ENCODE measurements at regions of chr12 and their contacts with region 1.

Region 1: GRCh38 chr12:50283229-50283923 is at the start of gene LIMA1:
- DNase-seq: peak; percentile 84 to 96 (median 93)
- ATAC-seq: peak; percentile 97
- H3K4me3 ChIP-seq: peak within 1 kb of the TSS; percentile 57 to 87
- H3K4me3 Mint-ChIP-seq: peak within 1 kb of the TSS; percentile 93
- H3K27ac ChIP-seq: peak within 1 kb of the TSS; percentile 59 to 69
- H3K27ac Mint-ChIP-seq: peak within 1 kb of the TSS; percentile 93
- H3K4me1 ChIP-seq: peaks cover 19% of the 10 kb centered on the region
- H3K4me1 Mint-ChIP-seq: peaks cover 29% of the 10 kb centered on the region
- H3K27me3 ChIP-seq: no peaks in the 10 kb centered on the region
- H3K27me3 Mint-ChIP-seq: no peaks in the 10 kb centered on the region
- CTCF ChIP-seq: no peak
- total RNA-seq, gene LIMA1: 4.2 TPM

Region 2: GRCh38 chr12:50025187-50026059 is 258.0 kb before region 1 on chr12 and contains the start of gene RACGAP1:
- CTCF ChIA-PET with region 1: no interaction called
- POLR2A ChIA-PET with region 1: no interaction called
- intact Hi-C with region 1: loop called in 1 of 2 experiments (anchors 1 kb)
- DNase-seq: peak; percentile 88 to 99 (median 94)
- ATAC-seq: peak; percentile 97
- H3K4me3 ChIP-seq: peak within 1 kb of the TSS; percentile 62 to 78
- H3K4me3 Mint-ChIP-seq: peak within 1 kb of the TSS; percentile 98
- H3K27ac ChIP-seq: peak within 1 kb of the TSS; percentile 38 to 63
- H3K27ac Mint-ChIP-seq: peak within 1 kb of the TSS; percentile 86
- H3K4me1 ChIP-seq: no peaks in the 10 kb centered on the region
- H3K4me1 Mint-ChIP-seq: peaks cover 16% of the 10 kb centered on the region
- H3K27me3 ChIP-seq: no peaks in the 10 kb centered on the region
- H3K27me3 Mint-ChIP-seq: no peaks in the 10 kb centered on the region
- CTCF ChIP-seq: no peak
- total RNA-seq, gene RACGAP1: 2.2 to 2.8 TPM

Region 3: DNA sequence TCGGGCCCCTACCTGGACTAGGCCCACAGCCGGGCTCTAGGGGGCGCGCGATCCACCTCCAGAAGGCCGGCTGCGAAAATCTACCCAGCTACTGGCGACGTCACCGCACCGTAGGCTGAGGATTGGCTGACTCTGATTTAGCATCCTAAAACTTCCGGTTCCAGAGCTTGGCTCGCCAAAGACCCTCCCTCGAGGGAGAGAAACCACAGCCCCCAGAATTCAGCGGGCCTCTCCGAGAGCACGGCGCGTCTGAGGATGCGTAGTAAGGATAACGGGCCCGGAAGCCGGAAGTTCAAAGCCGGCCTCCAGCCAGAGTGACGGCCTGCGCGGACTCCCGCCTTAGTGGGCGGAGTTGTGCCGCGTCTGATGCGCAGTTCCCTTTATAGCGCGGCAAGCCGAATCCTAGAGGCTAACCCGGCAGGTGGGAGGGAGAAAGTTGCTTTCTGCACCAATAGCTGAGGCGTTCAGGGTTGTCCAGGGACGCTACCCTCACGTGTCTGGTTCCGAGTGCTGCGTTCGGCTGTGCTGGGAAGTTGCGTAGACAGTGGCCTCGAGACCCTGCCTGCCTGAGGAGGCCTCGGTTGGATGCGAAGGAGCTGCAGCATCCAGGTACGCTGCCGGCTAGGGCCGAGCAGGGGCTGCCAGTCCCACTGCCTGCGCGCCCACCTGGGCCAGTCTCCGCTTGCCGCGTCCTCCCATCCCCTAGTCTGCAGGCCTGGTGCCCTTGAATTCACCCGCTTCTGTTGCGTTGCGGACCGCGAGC is 171.5 kb before region 1 on chr12 and contains the start of gene COX14:
- CTCF ChIA-PET with region 1: interaction called, 9 read pairs
- POLR2A ChIA-PET with region 1: interaction called, 12 read pairs
- intact Hi-C with region 1: loop called in 1 of 2 experiments (anchors 10 kb)
- DNase-seq: peak; percentile 98 to 100 (median 99)
- ATAC-seq: peak; percentile 82
- H3K4me3 ChIP-seq: peak within 1 kb of the TSS; percentile 88 to 98
- H3K4me3 Mint-ChIP-seq: peak within 1 kb of the TSS; percentile 99
- H3K27ac ChIP-seq: peak within 1 kb of the TSS; percentile 97 to 98
- H3K27ac Mint-ChIP-seq: peak within 1 kb of the TSS; percentile 95
- H3K4me1 ChIP-seq: peaks cover 36% of the 10 kb centered on the region
- H3K4me1 Mint-ChIP-seq: peaks cover 35% of the 10 kb centered on the region
- H3K27me3 ChIP-seq: no peaks in the 10 kb centered on the region
- H3K27me3 Mint-ChIP-seq: no peaks in the 10 kb centered on the region
- CTCF ChIP-seq: peak; percentile 97
- total RNA-seq, gene COX14: 42.2 to 43.3 TPM

Region 4: GRCh38 chr12:50211392-50212070 is 71.8 kb before region 1 on chr12:
- CTCF ChIA-PET with region 1: interaction called, 5 read pairs
- POLR2A ChIA-PET with region 1: interaction called, 4 read pairs
- intact Hi-C with region 1: loop called in 1 of 2 experiments (anchors 2 kb)
- DNase-seq: peak in 2 of 9 experiments; percentile 30 to 62
- ATAC-seq: no peak
- H3K4me3 ChIP-seq: no peak overlapping the region
- H3K4me3 Mint-ChIP-seq: peak overlapping the region; percentile 70
- H3K27ac ChIP-seq: peak overlapping the region; percentile 20 to 81
- H3K27ac Mint-ChIP-seq: peak overlapping the region; percentile 94
- H3K4me1 ChIP-seq: peaks cover 34% of the 10 kb centered on the region
- H3K4me1 Mint-ChIP-seq: peaks cover 47% of the 10 kb centered on the region
- H3K27me3 ChIP-seq: no peaks in the 10 kb centered on the region
- H3K27me3 Mint-ChIP-seq: no peaks in the 10 kb centered on the region
- CTCF ChIP-seq: no peak

Region 5: GRCh38 chr12:50400598-50401364 is 117.4 kb after region 1 on chr12 and contains the start of gene LARP4:
- CTCF ChIA-PET with region 1: no interaction called
- POLR2A ChIA-PET with region 1: no interaction called
- intact Hi-C with region 1: loop called (anchors 1 kb)
- DNase-seq: peak; percentile 78 to 94 (median 89)
- ATAC-seq: peak; percentile 95
- H3K4me3 ChIP-seq: peak within 1 kb of the TSS; percentile 97 to 100
- H3K4me3 Mint-ChIP-seq: peak within 1 kb of the TSS; percentile 99
- H3K27ac ChIP-seq: peak within 1 kb of the TSS; percentile 63 to 72
- H3K27ac Mint-ChIP-seq: peak within 1 kb of the TSS; percentile 97
- H3K4me1 ChIP-seq: peaks cover 23% of the 10 kb centered on the region
- H3K4me1 Mint-ChIP-seq: peaks cover 38% of the 10 kb centered on the region
- H3K27me3 ChIP-seq: no peaks in the 10 kb centered on the region
- H3K27me3 Mint-ChIP-seq: peaks cover 5% of the 10 kb centered on the region
- CTCF ChIP-seq: no peak
- total RNA-seq, gene LARP4: 20.1 to 22.3 TPM

Measured in CD8-positive, alpha-beta T cell (primary cell).